Naive thymus-derived CD4-positive, alpha-beta T cell (primary cell): ENCODE measurements at regions of chr1 and their contacts with region 1.

Region 1: GRCh38 chr1:15617175-15617880 is at the start of gene DDI2:
- DNase-seq: peak; percentile 86 to 97 (median 88)
- ATAC-seq: peak; percentile 94
- H3K4me3 ChIP-seq: peak within 1 kb of the TSS; percentile 96
- H3K4me3 Mint-ChIP-seq: peak within 1 kb of the TSS; percentile 83 to 96 (median 94)
- H3K27ac ChIP-seq: peak within 1 kb of the TSS; percentile 88
- H3K27ac Mint-ChIP-seq: peak within 1 kb of the TSS; percentile 84 to 96 (median 92)
- H3K4me1 ChIP-seq: peaks cover 20 to 30% of the 10 kb centered on the region in 2 donors
- H3K4me1 Mint-ChIP-seq: peaks cover 29 to 51% (median 43%) of the 10 kb centered on the region in 7 donors
- H3K27me3 ChIP-seq: no peaks in the 10 kb centered on the region
- H3K27me3 Mint-ChIP-seq: no peaks in the 10 kb centered on the region
- total RNA-seq, gene DDI2: 24.5 to 46.8 (median 37.0) TPM

Region 2: DNA sequence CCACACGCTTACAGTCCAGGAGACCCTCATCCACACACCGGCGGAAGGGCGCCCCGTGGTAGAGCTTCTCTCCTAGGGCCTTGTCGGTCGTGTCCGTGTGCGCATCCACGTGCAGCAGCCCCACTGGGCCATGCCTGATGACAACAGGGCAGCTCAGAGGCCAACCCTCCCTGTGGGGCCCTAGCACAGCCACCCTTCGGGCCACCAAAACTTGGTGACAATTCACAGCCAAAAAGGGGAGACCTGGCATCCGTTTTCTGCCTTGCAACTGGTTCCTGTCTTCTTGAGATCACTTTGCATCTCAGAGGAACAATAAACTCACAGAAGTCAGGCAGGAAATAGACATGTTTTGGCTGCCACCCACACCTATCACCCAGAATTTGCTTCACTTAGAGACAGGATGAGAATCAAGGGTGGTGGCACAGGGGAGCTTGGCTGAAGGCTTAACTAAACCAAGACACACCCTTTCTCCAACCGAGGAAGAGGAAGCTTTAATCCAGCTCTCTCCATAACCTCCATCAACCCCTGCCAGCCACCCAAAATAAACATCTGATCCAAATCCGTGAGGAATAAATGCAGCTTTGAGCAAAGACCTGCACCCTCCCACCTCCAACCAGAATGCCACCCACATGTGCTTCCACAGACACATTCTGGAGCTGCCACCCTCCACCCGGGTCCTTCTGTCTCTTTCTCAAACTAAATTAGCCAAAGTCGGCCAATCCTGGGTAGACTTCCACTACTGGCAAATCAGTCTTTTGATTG is 38.2 kb before region 1 on chr1:
- CTCF ChIA-PET with region 1: no interaction called
- POLR2A ChIA-PET with region 1: interaction called, 35 read pairs
- intact Hi-C with region 1: loop called (anchors 1 kb)
- DNase-seq: peak in 8 of 9 donors; percentile 32 to 83 (median 76)
- ATAC-seq: peak; percentile 89
- H3K4me3 ChIP-seq: peak overlapping the region; percentile 33
- H3K4me3 Mint-ChIP-seq: peak overlapping the region; percentile 51 to 83 (median 76)
- H3K27ac ChIP-seq: peak overlapping the region; percentile 75
- H3K27ac Mint-ChIP-seq: peak overlapping the region; percentile 91 to 99 (median 96)
- H3K4me1 ChIP-seq: peaks cover 27 to 58% of the 10 kb centered on the region in 2 donors
- H3K4me1 Mint-ChIP-seq: peaks cover 29 to 62% (median 46%) of the 10 kb centered on the region in 7 donors
- H3K27me3 ChIP-seq: no peaks in the 10 kb centered on the region
- H3K27me3 Mint-ChIP-seq: no peaks in the 10 kb centered on the region

Region 3: DNA sequence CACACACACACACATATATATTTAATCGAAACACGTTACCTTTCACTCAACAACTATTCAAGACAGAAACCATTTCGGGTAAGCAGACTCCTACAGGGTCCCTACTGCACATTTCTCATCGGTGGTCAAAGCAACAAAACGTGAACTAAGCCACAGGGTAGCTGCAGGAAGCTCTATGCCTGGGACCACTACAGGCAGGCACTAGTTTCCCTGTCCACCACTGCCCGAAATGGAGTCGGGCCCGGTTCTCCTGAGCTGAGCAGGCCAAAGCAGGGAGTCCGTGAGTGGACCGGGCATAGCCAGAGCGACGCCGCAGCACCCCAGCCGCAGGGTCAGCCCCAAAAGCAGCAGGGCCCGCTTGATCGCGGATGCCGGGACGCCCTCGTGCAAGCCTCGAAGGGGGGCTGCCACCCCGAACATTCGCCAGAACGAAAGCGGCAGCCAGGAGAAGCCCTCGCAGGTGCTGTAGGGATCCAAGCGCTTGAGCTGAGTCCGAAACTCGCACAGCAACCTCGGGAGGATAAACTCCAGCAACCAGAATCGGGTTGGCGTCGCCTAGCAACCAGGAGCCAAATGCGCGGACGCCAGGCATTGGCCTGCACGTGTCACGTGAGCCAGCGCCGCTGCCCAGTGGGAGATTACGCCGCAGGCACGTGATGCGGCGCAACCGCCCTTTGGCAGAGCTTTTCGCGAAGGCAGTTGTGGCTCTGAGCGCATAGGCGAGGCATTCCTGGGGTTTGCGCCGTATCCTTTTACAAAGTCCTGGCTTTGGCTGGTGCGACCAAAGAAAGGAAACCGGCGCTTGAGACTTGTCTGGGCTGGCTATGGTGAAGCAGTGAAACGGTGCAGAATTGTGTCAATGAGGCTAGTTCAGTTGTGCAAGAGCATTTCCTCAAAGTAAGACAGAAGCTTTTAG is 14.0 kb before region 1 on chr1:
- CTCF ChIA-PET with region 1: interaction called, 3 read pairs
- POLR2A ChIA-PET with region 1: interaction called, 20 read pairs
- intact Hi-C with region 1: loop called (anchors 1 kb)
- DNase-seq: peak; percentile 80 to 95 (median 90)
- ATAC-seq: peak; percentile 99
- H3K4me3 ChIP-seq: peak overlapping the region; percentile 88
- H3K4me3 Mint-ChIP-seq: peak overlapping the region; percentile 73 to 95 (median 82)
- H3K27ac ChIP-seq: peak overlapping the region; percentile 68
- H3K27ac Mint-ChIP-seq: peak overlapping the region; percentile 57 to 94 (median 81)
- H3K4me1 ChIP-seq: peaks cover 9 to 11% of the 10 kb centered on the region in 2 donors
- H3K4me1 Mint-ChIP-seq: peaks cover 0 to 14% (median 12%) of the 10 kb centered on the region in 7 donors
- H3K27me3 ChIP-seq: no peaks in the 10 kb centered on the region
- H3K27me3 Mint-ChIP-seq: peaks cover 0 to 13% (median 0%) of the 10 kb centered on the region in 5 donors

Region 4: DNA sequence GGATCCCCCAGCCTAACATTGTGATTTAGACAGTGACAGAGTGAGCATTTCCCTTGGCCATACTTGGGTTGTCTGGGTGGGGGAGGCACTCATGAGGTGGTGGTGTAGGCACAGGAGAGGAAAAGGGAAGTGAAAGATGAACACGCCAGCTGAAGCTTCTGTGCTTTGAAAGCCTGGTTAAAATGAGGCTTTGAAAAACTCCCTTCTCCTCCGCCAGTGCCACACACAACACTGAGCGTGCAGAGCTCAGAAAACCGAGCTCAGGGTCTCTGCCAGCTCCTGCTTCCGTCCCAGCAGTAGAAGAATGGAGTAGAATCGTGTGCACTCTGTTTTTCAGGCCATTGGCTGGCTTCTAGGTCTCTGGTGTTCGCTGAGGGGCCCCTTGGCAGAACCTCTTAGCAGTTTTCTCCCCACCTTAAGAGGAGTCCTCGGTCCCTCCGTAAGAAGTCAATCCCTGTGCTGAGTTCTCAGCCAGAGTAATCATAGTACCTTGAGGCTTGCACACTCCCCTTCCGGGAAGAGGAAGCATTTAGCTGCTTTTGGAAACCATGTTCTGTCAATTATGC is 79.7 kb after region 1 on chr1:
- CTCF ChIA-PET with region 1: no interaction called
- POLR2A ChIA-PET with region 1: interaction called, 3 read pairs
- intact Hi-C with region 1: loop called in 1 of 2 experiments (anchors 5 kb)
- DNase-seq: peak; percentile 17 to 66 (median 53)
- ATAC-seq: peak; percentile 87
- H3K4me3 ChIP-seq: peak overlapping the region; percentile 62
- H3K4me3 Mint-ChIP-seq: peak overlapping the region; percentile 85 to 94 (median 90)
- H3K27ac ChIP-seq: peak overlapping the region; percentile 72
- H3K27ac Mint-ChIP-seq: peak overlapping the region; percentile 84 to 99 (median 95)
- H3K4me1 ChIP-seq: peaks cover 10 to 17% of the 10 kb centered on the region in 2 donors
- H3K4me1 Mint-ChIP-seq: peaks cover 12 to 74% (median 39%) of the 10 kb centered on the region in 7 donors
- H3K27me3 ChIP-seq: no peaks in the 10 kb centered on the region
- H3K27me3 Mint-ChIP-seq: no peaks in the 10 kb centered on the region